CD4-positive, alpha-beta T cell (primary cell): ENCODE measurements at regions of chr11 and their contacts with region 1.

Region 1: DNA sequence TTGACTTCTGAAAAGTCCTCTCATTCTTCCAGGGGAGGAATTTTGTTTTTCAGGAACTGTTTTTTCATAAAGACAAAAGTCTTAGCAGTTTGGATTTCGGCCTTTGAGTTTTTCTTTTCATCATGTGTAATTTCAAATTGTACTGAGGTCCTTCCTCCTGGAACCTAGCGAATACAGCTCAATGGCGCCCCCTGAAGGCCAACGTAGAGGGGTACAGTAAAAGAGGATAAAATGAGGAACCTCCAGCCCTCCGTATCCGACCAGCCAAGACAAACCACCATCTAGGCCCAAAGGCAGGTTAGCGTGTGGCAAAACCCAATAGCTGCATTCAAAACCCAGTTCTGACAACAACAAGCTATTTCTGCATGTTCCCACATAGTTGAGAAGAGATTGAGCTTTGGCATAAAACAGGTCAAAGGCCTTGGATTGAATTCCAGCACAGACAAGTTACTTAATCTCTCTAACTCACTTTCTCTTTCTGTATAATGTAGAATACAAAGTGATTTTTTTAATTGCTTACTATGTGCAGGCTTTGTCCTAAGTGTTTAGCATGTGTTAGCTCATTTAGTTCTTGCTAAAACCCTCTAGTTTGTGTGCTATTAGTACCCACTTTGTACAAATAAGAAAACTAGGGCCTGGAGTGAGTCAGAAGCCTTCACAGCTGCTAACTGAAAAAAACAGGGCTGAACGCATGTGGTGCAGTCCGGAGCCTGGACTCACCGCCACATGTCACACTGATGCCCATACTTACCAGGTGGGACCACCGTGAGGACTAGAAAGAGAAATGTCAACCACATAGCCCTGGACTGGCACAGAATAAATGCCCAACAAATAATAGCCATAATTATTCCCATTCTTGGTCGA is 43.2 kb upstream of the ETS1 start:
- DNase-seq: peak; percentile 85 to 98 (median 92)
- ATAC-seq: peak; percentile 79
- H3K4me3 ChIP-seq: no peak overlapping the region
- H3K4me3 Mint-ChIP-seq: peak overlapping the region; percentile 62
- H3K27ac ChIP-seq: peak overlapping the region; percentile 56 to 70
- H3K27ac Mint-ChIP-seq: peak overlapping the region; percentile 97
- H3K4me1 ChIP-seq: peaks cover 65% of the 10 kb centered on the region
- H3K4me1 Mint-ChIP-seq: peaks cover 69% of the 10 kb centered on the region
- H3K27me3 ChIP-seq: no peaks in the 10 kb centered on the region
- H3K27me3 Mint-ChIP-seq: no peaks in the 10 kb centered on the region
- CTCF ChIP-seq: peak; percentile 89

Region 2: DNA sequence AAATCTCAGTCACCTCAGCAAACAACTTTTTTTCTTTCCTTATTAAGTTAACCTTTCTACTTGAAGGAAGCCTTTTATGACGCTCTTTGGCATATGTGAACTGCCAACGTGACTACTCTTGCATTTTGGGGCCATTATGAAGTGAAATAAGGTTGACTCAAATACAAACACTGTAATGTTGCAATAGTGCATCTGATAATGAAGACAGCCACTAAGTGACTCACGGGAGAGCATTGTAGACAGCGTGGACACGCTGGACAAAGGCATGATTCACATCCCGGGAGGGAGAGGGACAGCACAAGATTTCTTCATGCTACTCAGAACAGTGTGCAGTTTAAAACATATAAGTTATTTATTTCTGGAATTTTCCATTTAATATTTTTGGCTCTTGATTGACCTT is 604.0 kb before region 1 on chr11:
- CTCF ChIA-PET with region 1: interaction called, 4 read pairs
- POLR2A ChIA-PET with region 1: no interaction called
- intact Hi-C with region 1: loop called (anchors 1 to 2 kb)
- DNase-seq: peak in 1 of 14 experiments; percentile 41
- ATAC-seq: no peak
- H3K4me3 ChIP-seq: no peak overlapping the region
- H3K4me3 Mint-ChIP-seq: no peak overlapping the region
- H3K27ac ChIP-seq: no peak overlapping the region
- H3K27ac Mint-ChIP-seq: no peak overlapping the region
- H3K4me1 ChIP-seq: peaks cover under 1% of the 10 kb centered on the region
- H3K4me1 Mint-ChIP-seq: peaks cover 4% of the 10 kb centered on the region
- H3K27me3 ChIP-seq: peaks cover 0 to 3% of the 10 kb centered on the region in 2 experiments
- H3K27me3 Mint-ChIP-seq: peaks cover 3% of the 10 kb centered on the region
- CTCF ChIP-seq: no peak

Region 3: DNA sequence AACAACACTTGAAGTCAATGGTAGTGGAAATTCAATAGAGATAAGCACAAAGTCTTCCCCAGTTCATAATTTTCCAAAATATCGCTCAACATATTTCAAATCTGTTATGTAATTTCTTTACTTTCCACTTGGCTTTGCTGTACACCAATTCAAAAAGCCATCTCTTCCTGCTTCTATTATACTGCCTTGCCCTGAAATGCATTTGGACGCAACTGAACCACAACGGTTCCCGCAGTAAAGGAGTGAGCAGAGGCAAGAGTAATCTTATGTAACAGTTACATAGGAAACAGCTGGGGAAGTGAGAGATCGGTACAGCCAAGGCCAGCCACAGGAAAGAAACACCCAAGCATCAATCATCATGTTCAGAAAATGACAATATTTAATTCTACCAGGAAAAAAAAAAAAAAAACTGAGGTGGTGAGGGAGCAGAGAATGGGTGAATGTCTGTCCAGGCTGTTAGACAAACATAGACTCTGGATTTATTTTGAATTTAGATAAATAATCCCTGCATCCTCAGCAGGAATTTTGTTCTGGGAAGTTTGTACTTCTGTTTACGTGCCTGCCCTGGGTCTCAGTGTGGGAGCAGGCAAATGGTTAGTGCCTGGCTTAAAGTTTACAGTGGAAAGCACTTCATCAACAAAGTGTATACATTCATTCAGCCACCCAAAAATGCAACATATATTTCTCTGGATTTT is 435.4 kb before region 1 on chr11:
- CTCF ChIA-PET with region 1: interaction called, 9 read pairs
- POLR2A ChIA-PET with region 1: interaction called, 5 read pairs
- intact Hi-C with region 1: loop called (anchors 1 kb)
- DNase-seq: peak in 13 of 14 experiments; percentile 9 to 86 (median 39)
- ATAC-seq: peak; percentile 98
- H3K4me3 ChIP-seq: no peak overlapping the region
- H3K4me3 Mint-ChIP-seq: peak overlapping the region; percentile 47
- H3K27ac ChIP-seq: peak overlapping the region in 1 of 2 donors; percentile 33
- H3K27ac Mint-ChIP-seq: peak overlapping the region; percentile 60
- H3K4me1 ChIP-seq: peaks cover 9% of the 10 kb centered on the region
- H3K4me1 Mint-ChIP-seq: peaks cover 35% of the 10 kb centered on the region
- H3K27me3 ChIP-seq: no peaks in the 10 kb centered on the region
- H3K27me3 Mint-ChIP-seq: no peaks in the 10 kb centered on the region
- CTCF ChIP-seq: peak; percentile 58

Region 4: GRCh38 chr11:128323381-128323780 is 307.2 kb before region 1 on chr11:
- CTCF ChIA-PET with region 1: interaction called, 4 read pairs
- POLR2A ChIA-PET with region 1: interaction called, 17 read pairs
- intact Hi-C with region 1: no loop called
- DNase-seq: peak in 6 of 14 experiments; percentile 37 to 83 (median 66)
- ATAC-seq: peak; percentile 10
- H3K4me3 ChIP-seq: no peak overlapping the region
- H3K4me3 Mint-ChIP-seq: peak overlapping the region; percentile 47
- H3K27ac ChIP-seq: peak overlapping the region; percentile 89 to 91
- H3K27ac Mint-ChIP-seq: peak overlapping the region; percentile 93
- H3K4me1 ChIP-seq: peaks cover 85% of the 10 kb centered on the region
- H3K4me1 Mint-ChIP-seq: peaks cover 84% of the 10 kb centered on the region
- H3K27me3 ChIP-seq: no peaks in the 10 kb centered on the region
- H3K27me3 Mint-ChIP-seq: no peaks in the 10 kb centered on the region
- CTCF ChIP-seq: peak; percentile 52

Region 5: GRCh38 chr11:128497061-128497775 is 133.4 kb before region 1 on chr11:
- CTCF ChIA-PET with region 1: interaction called, 22 read pairs
- POLR2A ChIA-PET with region 1: interaction called, 36 read pairs
- intact Hi-C with region 1: no loop called
- DNase-seq: peak in 3 of 14 experiments; percentile 16 to 65 (median 59)
- ATAC-seq: no peak
- H3K4me3 ChIP-seq: peak overlapping the region; percentile 39
- H3K4me3 Mint-ChIP-seq: peak overlapping the region; percentile 65
- H3K27ac ChIP-seq: peak overlapping the region; percentile 39 to 93
- H3K27ac Mint-ChIP-seq: peak overlapping the region; percentile 99
- H3K4me1 ChIP-seq: peaks cover 75% of the 10 kb centered on the region
- H3K4me1 Mint-ChIP-seq: peaks cover 100% of the 10 kb centered on the region
- H3K27me3 ChIP-seq: no peaks in the 10 kb centered on the region
- H3K27me3 Mint-ChIP-seq: no peaks in the 10 kb centered on the region
- CTCF ChIP-seq: no peak

Region 6: GRCh38 chr11:128831174-128832120 is 200.8 kb after region 1 on chr11:
- CTCF ChIA-PET with region 1: interaction called, 11 read pairs
- POLR2A ChIA-PET with region 1: interaction called, 12 read pairs
- intact Hi-C with region 1: loop called (anchors 1 kb)
- DNase-seq: peak; percentile 74 to 94 (median 86)
- ATAC-seq: peak; percentile 75
- H3K4me3 ChIP-seq: peak overlapping the region; percentile 29
- H3K4me3 Mint-ChIP-seq: peak overlapping the region; percentile 85
- H3K27ac ChIP-seq: peak overlapping the region; percentile 55 to 74
- H3K27ac Mint-ChIP-seq: peak overlapping the region; percentile 83
- H3K4me1 ChIP-seq: peaks cover 17% of the 10 kb centered on the region
- H3K4me1 Mint-ChIP-seq: peaks cover 44% of the 10 kb centered on the region
- H3K27me3 ChIP-seq: no peaks in the 10 kb centered on the region
- H3K27me3 Mint-ChIP-seq: no peaks in the 10 kb centered on the region
- CTCF ChIP-seq: peak; percentile 93